AG04449 (cell line): ENCODE measurements at regions of chr15 and their contacts with region 1.

Region 1: GRCh38 chr15:50883903-50884302 is 24.6 kb upstream of the AP4E1 start:
- DNase-seq: no peak
- H3K4me3 ChIP-seq: no peak overlapping the region
- CTCF ChIP-seq: no peak

Region 2: DNA sequence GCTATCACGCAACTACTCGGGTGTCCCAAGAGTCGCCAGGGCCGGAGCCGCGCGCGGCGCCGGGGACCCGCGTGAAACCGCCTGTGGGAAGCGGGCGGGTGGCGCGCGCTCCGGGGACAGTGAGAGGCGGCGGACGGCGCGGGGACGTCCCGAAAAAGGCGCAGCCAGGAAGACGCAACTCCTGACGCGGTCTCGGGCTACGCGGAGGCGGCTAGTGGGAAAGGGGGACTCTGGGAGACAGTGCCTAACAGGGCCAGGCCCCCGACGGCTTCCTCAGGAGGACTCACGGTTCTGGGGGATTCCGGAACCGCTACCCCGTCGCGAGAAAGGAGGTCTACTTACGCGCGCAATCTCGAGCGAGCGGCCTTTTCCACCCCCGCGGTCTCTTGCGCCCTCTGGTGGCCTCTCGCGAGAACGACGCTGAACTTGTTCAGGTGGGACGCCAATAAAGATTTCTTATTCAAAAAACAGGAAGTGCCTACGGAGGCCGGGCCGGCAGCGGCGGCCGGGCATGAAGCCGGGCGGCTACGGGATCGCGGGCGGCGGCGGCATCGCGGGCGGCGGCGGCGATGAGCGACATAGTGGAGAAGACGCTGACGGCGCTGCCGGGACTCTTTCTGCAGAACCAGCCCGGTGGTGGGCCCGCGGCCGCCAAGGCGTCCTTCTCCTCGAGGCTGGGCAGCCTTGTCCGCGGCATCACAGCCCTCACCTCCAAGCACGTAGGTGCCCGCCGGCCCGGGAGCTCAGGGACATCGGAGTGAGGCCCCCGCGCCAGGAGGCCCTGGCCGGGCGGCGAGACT is 24.5 kb after region 1 on chr15 and contains the start of gene AP4E1:
- CTCF ChIA-PET with region 1: interaction called, 18 read pairs
- POLR2A ChIA-PET with region 1: interaction called, 3 read pairs
- DNase-seq: peak; percentile 47
- H3K4me3 ChIP-seq: peak within 1 kb of the TSS; percentile 89
- CTCF ChIP-seq: peak; percentile 86

Region 3: GRCh38 chr15:51024735-51025453 is 141.0 kb after region 1 on chr15:
- CTCF ChIA-PET with region 1: no interaction called
- POLR2A ChIA-PET with region 1: no interaction called
- DNase-seq: no peak
- H3K4me3 ChIP-seq: no peak overlapping the region
- CTCF ChIP-seq: no peak